Activated B cell treated with CpG ODN at 0.5 μM for 24 hours (primary cell): ENCODE measurements at regions of chr1 and their contacts with region 1.

Region 1: GRCh38 chr1:221777431-221778072 is 35.7 kb upstream of the DUSP10 start:
- DNase-seq: no peak
- ATAC-seq: peak; percentile 65
- H3K4me3 Mint-ChIP-seq: peak overlapping the region; percentile 75
- H3K27ac Mint-ChIP-seq: peak overlapping the region; percentile 95
- H3K4me1 Mint-ChIP-seq: peaks cover 78% of the 10 kb centered on the region
- H3K27me3 Mint-ChIP-seq: no peaks in the 10 kb centered on the region
- CTCF ChIP-seq: peak; percentile 34

Region 2: DNA sequence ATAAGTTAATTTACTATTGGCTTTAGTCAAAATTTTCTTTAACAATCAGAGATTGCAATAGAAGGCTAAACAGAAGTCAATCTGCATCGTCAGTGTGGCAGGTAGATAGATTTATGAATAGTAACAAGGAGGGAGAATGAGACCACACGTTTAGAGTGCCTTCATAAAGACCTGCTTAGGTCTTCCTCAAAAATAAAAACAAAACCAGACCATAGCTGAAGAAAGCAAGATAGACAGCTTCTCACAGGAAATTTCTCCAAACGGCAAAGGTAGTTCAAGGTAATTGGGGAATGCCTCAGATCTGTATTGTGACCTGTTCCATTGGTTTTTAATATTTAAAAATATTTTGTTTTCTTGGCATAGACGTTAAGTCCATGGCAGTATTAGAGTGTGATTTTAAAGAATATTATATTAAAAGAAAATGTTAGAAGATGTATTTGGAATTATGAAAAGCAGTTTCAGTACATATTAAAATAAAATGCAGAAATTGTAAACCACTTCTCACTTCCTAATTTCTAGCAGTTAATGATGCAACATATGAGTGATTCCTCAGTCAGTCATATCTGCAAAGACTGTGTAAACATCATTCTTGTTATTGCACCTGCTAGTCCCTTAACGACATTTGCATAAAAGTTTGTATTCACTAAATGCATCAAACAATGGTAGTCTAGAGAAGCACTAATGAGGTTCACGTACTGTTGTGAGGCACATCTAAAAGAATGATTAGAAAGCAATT is 620.4 kb before region 1 on chr1:
- CTCF ChIA-PET with region 1: no interaction called
- POLR2A ChIA-PET with region 1: no interaction called
- intact Hi-C with region 1: loop called (anchors 1 kb)
- DNase-seq: no peak
- ATAC-seq: peak; percentile 93
- H3K4me3 Mint-ChIP-seq: no peak overlapping the region
- H3K27ac Mint-ChIP-seq: peak overlapping the region; percentile 74
- H3K4me1 Mint-ChIP-seq: peaks cover 29% of the 10 kb centered on the region
- H3K27me3 Mint-ChIP-seq: peaks cover under 1% of the 10 kb centered on the region
- CTCF ChIP-seq: no peak

Region 3: DNA sequence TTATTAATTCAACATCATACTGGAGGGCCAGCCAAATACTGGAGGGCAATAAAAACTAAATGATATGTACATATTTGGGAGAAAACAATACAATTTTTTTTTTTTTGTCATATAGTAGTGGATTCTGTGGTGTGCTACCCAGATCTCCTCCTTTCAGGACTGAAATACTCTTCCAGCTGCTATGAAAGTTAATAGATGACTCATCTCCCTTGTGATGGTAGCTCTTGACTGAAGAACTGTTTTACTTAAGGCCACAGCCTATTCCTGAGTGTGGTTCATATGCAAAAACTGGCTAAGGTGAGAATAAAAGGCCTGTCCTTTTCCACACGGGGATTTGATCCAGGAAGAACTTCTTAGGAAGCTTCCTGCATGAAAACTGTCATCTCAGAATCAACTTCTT is 590.4 kb before region 1 on chr1:
- CTCF ChIA-PET with region 1: no interaction called
- POLR2A ChIA-PET with region 1: no interaction called
- intact Hi-C with region 1: no loop called
- DNase-seq: no peak
- ATAC-seq: no peak
- H3K4me3 Mint-ChIP-seq: no peak overlapping the region
- H3K27ac Mint-ChIP-seq: no peak overlapping the region
- H3K4me1 Mint-ChIP-seq: no peaks in the 10 kb centered on the region
- H3K27me3 Mint-ChIP-seq: peaks cover 9% of the 10 kb centered on the region
- CTCF ChIP-seq: no peak

Region 4: DNA sequence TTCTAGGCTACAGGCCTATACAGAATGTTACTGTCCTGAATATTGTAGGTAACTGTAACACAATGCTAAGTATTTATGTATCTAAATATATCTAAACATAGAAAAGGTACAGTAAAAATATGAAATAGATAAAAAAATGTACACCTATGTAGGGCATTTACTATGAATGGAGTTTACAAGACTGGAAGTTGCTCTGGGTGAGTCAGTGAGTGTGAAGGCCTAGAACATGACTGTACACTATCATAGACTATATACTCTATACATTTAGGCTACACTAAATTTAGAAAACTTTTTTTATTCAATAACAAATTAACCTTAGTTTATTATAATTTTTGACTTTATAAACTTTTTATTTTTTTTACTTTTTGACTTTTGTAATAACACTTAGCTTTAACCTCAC is 172.6 kb before region 1 on chr1:
- CTCF ChIA-PET with region 1: no interaction called
- POLR2A ChIA-PET with region 1: no interaction called
- intact Hi-C with region 1: loop called (anchors 1 kb)
- DNase-seq: no peak
- ATAC-seq: no peak
- H3K4me3 Mint-ChIP-seq: no peak overlapping the region
- H3K27ac Mint-ChIP-seq: no peak overlapping the region
- H3K4me1 Mint-ChIP-seq: peaks cover 7% of the 10 kb centered on the region
- H3K27me3 Mint-ChIP-seq: no peaks in the 10 kb centered on the region
- CTCF ChIP-seq: no peak

Region 5: DNA sequence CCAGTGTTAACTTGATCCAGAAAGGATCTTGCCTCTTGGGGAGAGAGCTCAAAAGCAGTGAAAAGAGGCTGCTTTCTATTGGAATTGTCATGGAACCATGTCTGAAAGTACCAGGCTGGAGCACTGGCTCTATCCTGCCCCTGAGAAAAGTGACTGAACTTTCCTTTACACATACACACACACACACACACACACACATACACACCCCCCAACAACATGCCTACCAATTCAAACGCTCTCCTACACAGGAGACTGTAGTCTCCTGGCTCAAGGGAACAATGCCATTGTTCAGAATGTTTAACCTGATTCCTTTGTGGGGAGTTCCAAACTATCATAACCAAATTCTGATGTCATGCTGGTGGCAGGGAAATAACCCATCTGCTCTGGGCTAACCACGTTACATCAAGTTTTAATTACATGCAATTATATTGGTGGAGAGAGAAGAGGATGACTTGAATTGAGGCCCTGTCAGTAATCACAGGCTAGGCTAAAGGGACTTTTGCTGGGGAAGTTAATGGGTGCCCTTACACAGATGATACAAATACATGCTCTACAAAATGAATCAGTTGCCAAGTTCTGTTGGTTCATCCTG is 16.6 kb after region 1 on chr1:
- CTCF ChIA-PET with region 1: interaction called, 3 read pairs
- POLR2A ChIA-PET with region 1: interaction called, 80 read pairs
- intact Hi-C with region 1: loop called (anchors 1 kb)
- DNase-seq: no peak
- ATAC-seq: peak; percentile 80
- H3K4me3 Mint-ChIP-seq: peak overlapping the region; percentile 83
- H3K27ac Mint-ChIP-seq: peak overlapping the region; percentile 97
- H3K4me1 Mint-ChIP-seq: peaks cover 55% of the 10 kb centered on the region
- H3K27me3 Mint-ChIP-seq: no peaks in the 10 kb centered on the region
- CTCF ChIP-seq: no peak

Region 6: GRCh38 chr1:221829327-221830015 is 51.9 kb after region 1 on chr1:
- CTCF ChIA-PET with region 1: interaction called, 3 read pairs
- POLR2A ChIA-PET with region 1: interaction called, 14 read pairs
- intact Hi-C with region 1: no loop called
- DNase-seq: no peak
- ATAC-seq: peak; percentile 64
- H3K4me3 Mint-ChIP-seq: peak overlapping the region; percentile 66
- H3K27ac Mint-ChIP-seq: peak overlapping the region; percentile 90
- H3K4me1 Mint-ChIP-seq: peaks cover 58% of the 10 kb centered on the region
- H3K27me3 Mint-ChIP-seq: no peaks in the 10 kb centered on the region
- CTCF ChIP-seq: no peak

Region 7: DNA sequence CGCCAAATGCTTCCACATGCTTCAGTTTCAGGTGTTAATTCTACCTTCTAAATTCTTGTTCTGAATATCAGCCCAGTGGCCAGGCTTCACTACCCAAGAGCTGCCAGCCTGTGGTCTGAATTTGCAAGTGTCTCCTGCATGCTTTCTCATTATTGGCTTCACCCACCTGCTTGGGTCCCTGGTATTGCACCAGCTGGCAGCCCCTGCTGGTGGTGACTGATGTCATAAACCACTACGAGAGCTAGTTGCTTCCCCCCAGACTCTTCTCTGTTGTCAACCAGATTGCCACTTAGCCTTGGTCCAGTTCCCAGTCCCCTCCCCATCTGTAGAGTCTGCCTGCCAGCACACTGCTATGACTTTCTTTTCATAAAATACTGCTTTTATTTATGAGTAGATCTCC is 162.1 kb after region 1 on chr1:
- CTCF ChIA-PET with region 1: no interaction called
- POLR2A ChIA-PET with region 1: interaction called, 9 read pairs
- intact Hi-C with region 1: loop called (anchors 1 kb)
- DNase-seq: peak; percentile 49
- ATAC-seq: peak; percentile 95
- H3K4me3 Mint-ChIP-seq: peak overlapping the region; percentile 66
- H3K27ac Mint-ChIP-seq: peak overlapping the region; percentile 79
- H3K4me1 Mint-ChIP-seq: peaks cover 41% of the 10 kb centered on the region
- H3K27me3 Mint-ChIP-seq: no peaks in the 10 kb centered on the region
- CTCF ChIP-seq: no peak